ENCODE measurements at regions of chr5 and their contacts with region 1.

Region 1: DNA sequence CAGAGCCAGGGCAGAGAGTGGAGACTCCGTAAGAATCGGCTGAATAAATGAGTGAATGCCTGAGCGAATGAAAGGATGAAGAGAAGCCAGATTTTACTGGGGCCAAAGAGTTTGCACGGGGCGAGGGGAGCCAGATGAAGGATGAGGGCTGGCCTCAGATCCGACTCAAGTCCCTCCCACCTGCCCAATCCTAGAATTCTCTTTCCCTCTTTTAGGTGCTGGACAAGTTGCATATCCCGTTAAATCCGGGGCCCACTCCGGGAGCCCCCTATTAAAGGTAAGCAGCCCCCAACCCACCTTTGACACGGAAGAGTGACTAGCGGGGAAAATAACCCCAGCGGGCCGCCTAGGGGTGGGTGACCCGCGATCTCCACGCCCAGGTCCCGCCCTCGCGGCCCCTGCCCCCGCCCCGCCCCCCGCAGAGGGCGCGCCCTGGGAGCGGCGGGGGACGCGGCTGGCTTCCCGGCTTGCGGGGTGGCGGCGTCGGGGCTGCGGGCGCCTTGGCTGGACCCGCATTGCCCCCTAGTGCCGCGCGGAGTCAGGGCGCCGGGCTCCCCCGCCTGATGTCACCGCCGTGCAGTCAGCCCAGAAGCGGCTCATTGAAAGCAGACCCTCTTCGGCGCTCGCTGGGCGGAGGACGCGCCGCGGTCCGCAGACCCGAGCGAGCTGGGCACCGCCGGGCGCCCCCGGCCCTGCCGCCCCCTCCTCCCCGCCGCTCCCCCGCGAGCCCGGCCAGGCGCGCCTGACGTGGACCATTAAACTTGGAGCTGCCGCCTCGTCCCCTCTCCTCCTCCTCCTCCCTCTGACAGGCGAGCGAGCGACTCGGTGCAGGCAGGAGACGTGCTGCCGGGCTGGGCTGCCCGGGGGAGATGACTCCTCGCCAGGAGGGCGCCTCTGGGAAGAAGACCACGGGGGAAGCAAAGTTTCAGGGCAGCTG is at the start of gene ADRA1B:
- DNase-seq: no peak
- ATAC-seq: peak; percentile 89
- H3K4me3 ChIP-seq: no peak within 1 kb of the TSS
- H3K27ac ChIP-seq: no peak within 1 kb of the TSS
- H3K4me1 ChIP-seq: peaks cover 12 to 30% of the 10 kb centered on the region in 2 experiments
- H3K27me3 ChIP-seq: peaks cover 16% of the 10 kb centered on the region; the same call in 1 of the 2 replicates
- CTCF ChIP-seq: peak; percentile 34 to 53 (median 40); a peak in 4 of 6 replicates
- POLR2A ChIP-seq: no peak
- RAD21 ChIP-seq: peak; percentile 79
- total RNA-seq, gene ADRA1B: not detected

Region 2: DNA sequence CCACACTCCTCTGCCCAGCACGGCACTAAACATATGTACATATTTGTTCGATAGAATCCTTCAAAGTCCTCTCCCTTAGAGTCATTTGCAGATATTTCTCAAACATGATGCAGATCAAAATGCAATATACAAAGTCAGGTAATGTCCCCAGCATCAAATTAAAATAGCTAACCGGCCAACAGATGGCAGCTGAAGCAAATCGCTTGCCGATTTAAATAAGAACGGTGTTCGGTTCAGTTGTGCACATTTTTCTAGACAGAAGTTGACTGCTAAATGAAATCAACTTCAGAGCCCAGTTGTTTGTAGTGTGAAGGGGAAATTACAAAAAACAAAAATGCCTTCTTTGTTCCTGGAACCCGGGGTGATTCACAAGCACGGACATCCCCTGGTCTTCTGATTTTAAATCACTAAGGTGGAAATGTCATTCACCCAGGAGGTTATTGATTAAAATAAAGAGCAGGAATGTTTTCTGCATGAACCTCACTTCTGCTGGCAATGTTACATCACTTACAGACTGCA is 1035.6 kb before region 1 on chr5:
- CTCF ChIA-PET with region 1: no interaction called
- POLR2A ChIA-PET with region 1: no interaction called
- RAD21 ChIA-PET with region 1: no interaction called
- intact Hi-C with region 1: no loop called
- DNase-seq: no peak
- ATAC-seq: no peak
- H3K4me3 ChIP-seq: no peak overlapping the region
- H3K27ac ChIP-seq: no peak overlapping the region
- H3K4me1 ChIP-seq: no peaks in the 10 kb centered on the region
- H3K27me3 ChIP-seq: peaks cover 45% of the 10 kb centered on the region
- CTCF ChIP-seq: no peak
- POLR2A ChIP-seq: no peak
- RAD21 ChIP-seq: no peak

Region 3: GRCh38 chr5:159286420-159287035 is 629.6 kb before region 1 on chr5:
- CTCF ChIA-PET with region 1: no interaction called
- POLR2A ChIA-PET with region 1: no interaction called
- RAD21 ChIA-PET with region 1: no interaction called
- intact Hi-C with region 1: loop called (anchors 10 kb)
- DNase-seq: no peak
- ATAC-seq: peak; percentile 50; the same call in 1 of the 2 replicates
- H3K4me3 ChIP-seq: no peak overlapping the region
- H3K27ac ChIP-seq: no peak overlapping the region
- H3K4me1 ChIP-seq: no peaks in the 10 kb centered on the region
- H3K27me3 ChIP-seq: no peaks in the 10 kb centered on the region
- CTCF ChIP-seq: peak; percentile 35 to 56 (median 46); a peak in 4 of 6 replicates
- POLR2A ChIP-seq: no peak
- RAD21 ChIP-seq: peak; percentile 75

Region 4: DNA sequence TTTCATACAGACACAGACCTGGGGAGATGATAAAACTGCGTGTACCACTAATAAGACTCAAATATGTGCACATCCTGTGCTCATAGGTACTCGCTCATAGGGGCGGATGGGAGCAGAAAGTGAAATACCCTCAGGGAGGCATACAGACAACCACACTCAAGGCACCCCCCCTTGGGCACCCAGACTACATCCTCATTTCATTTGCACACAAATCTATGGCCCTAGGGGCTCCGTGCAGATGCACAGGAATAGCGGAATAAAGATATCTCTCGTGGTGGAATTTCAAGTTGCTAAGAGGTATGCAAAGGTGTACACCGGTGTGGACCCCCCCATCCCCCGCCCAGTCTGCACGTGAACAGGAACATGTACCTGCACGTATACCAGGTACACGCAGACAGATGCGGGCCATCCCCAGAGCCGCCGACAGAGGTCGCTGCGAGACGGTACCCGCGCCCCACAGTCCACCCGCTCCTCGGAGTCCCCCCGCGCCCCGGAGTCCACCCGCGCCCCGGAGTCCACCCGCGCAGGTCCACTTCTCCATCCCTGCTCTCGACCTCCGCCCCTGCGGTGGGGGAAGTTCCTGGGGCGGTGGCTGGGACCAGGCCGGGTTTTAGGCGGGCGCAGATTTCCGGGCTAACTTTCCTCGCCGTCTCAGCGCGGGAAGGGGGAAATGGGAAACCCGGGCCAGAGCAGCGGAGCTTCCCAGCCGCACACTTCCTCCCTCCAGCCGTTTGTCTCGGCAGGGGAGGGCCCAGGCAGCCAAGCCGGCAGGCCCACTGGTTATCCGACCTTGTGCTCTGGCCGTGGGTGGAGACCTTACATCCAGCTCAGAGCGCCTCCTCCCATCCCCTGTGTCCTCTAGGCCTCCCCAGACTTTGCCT is 584.8 kb before region 1 on chr5:
- CTCF ChIA-PET with region 1: no interaction called
- POLR2A ChIA-PET with region 1: no interaction called
- RAD21 ChIA-PET with region 1: no interaction called
- intact Hi-C with region 1: loop called (anchors 5 kb)
- DNase-seq: no peak
- ATAC-seq: peak; percentile 94
- H3K4me3 ChIP-seq: peak overlapping the region; percentile 57 to 70
- H3K27ac ChIP-seq: peak overlapping the region; percentile 45; the same call in 1 of the 2 replicates
- H3K4me1 ChIP-seq: peaks cover 0 to 23% of the 10 kb centered on the region in 2 experiments; a peak in 2 of 4 replicates
- H3K27me3 ChIP-seq: no peaks in the 10 kb centered on the region
- CTCF ChIP-seq: peak; percentile 61 to 83 (median 73); a peak in 5 of 6 replicates
- POLR2A ChIP-seq: no peak
- RAD21 ChIP-seq: peak; percentile 79

Region 5: DNA sequence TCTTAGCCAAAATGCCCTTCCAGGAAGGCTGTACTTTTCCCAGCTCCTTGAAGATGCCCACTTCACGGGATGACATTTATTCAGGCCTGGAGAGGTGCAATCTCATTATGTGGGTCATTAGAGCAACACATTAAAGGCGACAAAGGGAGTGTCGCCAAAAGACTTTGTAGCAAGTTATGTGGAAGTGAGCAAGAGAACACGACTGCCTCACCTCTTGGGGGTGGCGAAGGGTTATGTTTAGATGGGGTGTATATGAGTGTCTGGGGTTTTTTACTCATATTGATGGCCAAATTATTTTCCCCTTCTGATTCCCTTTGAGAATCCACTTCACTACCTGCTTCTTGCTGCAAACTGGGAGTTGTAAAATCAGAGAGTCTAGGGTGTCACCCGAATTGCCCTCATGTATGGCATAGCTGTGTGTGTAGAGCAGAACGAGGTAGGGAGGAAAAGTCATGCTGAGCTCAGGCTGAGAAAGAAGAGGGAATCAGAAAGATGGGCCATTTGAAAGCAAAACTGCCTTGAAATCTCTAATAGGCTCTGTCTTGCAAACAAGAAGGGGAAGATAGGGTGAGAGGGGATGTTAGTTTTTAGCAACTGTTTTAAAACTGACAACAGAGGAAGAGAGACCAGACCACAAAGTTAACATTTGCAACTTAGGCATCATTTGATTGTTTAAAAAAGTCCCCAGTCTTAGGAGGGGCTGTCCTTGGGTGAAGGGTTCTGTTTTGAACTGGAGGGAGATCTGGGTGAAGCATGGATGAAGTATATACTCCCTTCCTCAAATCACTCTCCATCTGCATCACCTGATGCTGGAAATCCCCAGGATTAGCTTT is 488.8 kb before region 1 on chr5:
- CTCF ChIA-PET with region 1: no interaction called
- POLR2A ChIA-PET with region 1: no interaction called
- RAD21 ChIA-PET with region 1: no interaction called
- intact Hi-C with region 1: no loop called
- DNase-seq: no peak
- ATAC-seq: no peak
- H3K4me3 ChIP-seq: no peak overlapping the region
- H3K27ac ChIP-seq: no peak overlapping the region
- H3K4me1 ChIP-seq: no peaks in the 10 kb centered on the region
- H3K27me3 ChIP-seq: no peaks in the 10 kb centered on the region
- CTCF ChIP-seq: no peak
- POLR2A ChIP-seq: no peak
- RAD21 ChIP-seq: no peak

Region 6: DNA sequence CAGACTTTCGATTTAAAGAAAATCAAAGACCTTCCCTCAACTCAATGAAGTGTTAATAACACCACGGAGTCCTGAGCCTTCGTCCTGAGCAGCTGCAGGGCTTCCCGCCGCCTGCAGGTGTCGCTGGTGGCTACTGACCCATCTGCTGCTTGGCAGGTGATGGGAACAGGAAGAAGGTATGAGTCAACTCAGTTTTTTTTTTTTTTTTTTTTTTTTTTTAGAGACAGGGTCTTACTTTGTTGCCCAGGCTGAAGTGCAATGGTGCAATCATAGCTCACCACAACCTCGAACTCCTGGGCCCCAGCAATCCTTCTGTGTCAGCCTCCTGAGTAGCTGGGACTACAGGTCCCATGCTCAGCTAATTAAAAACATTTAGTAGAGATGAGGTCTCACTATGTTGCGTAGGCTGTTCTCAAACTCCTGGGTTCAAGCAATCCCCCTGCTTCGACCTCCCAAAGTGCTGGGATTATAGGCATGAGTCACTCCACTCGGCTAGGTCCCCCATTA is 400.2 kb before region 1 on chr5:
- CTCF ChIA-PET with region 1: interaction called, 7 read pairs
- POLR2A ChIA-PET with region 1: no interaction called
- RAD21 ChIA-PET with region 1: no interaction called
- intact Hi-C with region 1: loop called (anchors 1 kb)
- DNase-seq: peak; percentile 44
- ATAC-seq: peak; percentile 94
- H3K4me3 ChIP-seq: no peak overlapping the region
- H3K27ac ChIP-seq: no peak overlapping the region
- H3K4me1 ChIP-seq: peaks cover 0 to 11% of the 10 kb centered on the region in 2 experiments; a peak in 2 of 4 replicates
- H3K27me3 ChIP-seq: no peaks in the 10 kb centered on the region
- CTCF ChIP-seq: peak; percentile 77 to 96 (median 95)
- POLR2A ChIP-seq: no peak
- RAD21 ChIP-seq: peak; percentile 91

Region 7: DNA sequence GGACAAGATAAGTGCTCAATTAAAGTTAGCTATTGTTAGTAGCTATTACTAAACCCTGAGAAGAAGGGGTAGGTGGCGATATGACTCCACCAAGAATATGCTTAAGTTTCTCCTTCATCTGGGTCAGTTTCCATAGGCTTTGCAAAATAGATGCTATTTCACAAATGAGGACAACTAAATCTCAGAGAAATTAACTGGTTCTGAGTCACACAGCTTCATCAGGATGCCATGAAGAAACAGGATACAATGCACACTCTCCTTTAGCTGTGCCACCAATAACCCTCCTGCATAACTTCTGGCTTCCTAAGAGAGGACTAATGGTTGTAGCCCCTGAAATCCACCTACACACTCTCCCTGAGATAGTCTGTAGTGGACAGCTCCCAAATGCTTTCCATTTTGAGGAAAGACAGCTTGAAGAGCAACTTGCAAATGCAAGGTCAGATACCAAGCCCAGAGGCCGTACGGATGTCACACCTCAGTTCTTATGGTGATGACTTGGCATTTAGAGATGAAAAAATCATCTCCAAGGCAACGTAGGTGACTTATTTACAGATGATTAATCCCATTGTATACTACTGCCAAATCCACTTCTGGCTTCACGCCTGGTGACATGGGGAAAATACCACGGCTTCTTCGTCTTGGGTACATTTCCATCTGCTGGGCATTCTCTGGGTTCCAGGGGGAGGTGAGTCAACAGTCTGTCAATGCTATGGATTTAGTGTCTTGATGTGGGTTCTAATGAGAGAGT is 334.5 kb before region 1 on chr5:
- CTCF ChIA-PET with region 1: no interaction called
- POLR2A ChIA-PET with region 1: no interaction called
- RAD21 ChIA-PET with region 1: no interaction called
- intact Hi-C with region 1: loop called (anchors 5 kb)
- DNase-seq: peak; percentile 94
- ATAC-seq: peak; percentile 68
- H3K4me3 ChIP-seq: no peak overlapping the region
- H3K27ac ChIP-seq: peak overlapping the region; percentile 49; the same call in 1 of the 2 replicates
- H3K4me1 ChIP-seq: peaks cover 28 to 40% of the 10 kb centered on the region in 2 experiments
- H3K27me3 ChIP-seq: no peaks in the 10 kb centered on the region
- CTCF ChIP-seq: peak in 2 of 3 experiments; percentile 23 to 39; a peak in 2 of 6 replicates
- POLR2A ChIP-seq: no peak
- RAD21 ChIP-seq: peak; percentile 54

Region 8: DNA sequence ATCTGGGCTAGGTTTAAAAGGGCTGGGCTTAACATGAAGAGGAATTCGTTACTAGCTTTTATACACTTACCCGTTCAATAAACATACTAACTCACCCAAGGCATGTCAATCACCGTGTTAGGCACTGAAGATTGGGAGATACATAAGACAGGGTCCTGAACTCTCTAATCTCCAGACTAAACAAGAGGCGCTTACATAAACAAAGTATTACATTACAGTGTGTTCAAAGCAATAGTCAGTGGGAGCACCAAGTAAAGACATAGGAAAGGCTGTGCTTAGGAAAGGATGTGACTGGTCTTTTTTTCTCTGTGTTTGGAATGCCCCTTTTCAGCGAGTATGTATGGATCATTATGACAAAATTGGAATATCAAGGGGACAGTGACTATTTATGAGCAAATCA is 203.5 kb before region 1 on chr5:
- CTCF ChIA-PET with region 1: no interaction called
- POLR2A ChIA-PET with region 1: no interaction called
- RAD21 ChIA-PET with region 1: no interaction called
- intact Hi-C with region 1: no loop called
- DNase-seq: no peak
- ATAC-seq: no peak
- H3K4me3 ChIP-seq: no peak overlapping the region
- H3K27ac ChIP-seq: no peak overlapping the region
- H3K4me1 ChIP-seq: no peaks in the 10 kb centered on the region
- H3K27me3 ChIP-seq: no peaks in the 10 kb centered on the region
- CTCF ChIP-seq: no peak
- POLR2A ChIP-seq: no peak
- RAD21 ChIP-seq: no peak

Region 9: GRCh38 chr5:159878988-159879471 is 37.1 kb before region 1 on chr5:
- CTCF ChIA-PET with region 1: no interaction called
- POLR2A ChIA-PET with region 1: no interaction called
- RAD21 ChIA-PET with region 1: no interaction called
- intact Hi-C with region 1: no loop called
- DNase-seq: no peak
- ATAC-seq: peak; percentile 95
- H3K4me3 ChIP-seq: no peak overlapping the region; a peak in 1 of 4 replicates
- H3K27ac ChIP-seq: no peak overlapping the region
- H3K4me1 ChIP-seq: peaks cover 5 to 21% of the 10 kb centered on the region in 2 experiments; a peak in 3 of 4 replicates
- H3K27me3 ChIP-seq: no peaks in the 10 kb centered on the region
- CTCF ChIP-seq: no peak
- POLR2A ChIP-seq: no peak
- RAD21 ChIP-seq: 0 out of 2 replicates have a peak, but pooled peaks have one; percentile 1